ENCODE measurements at regions of chr6 and their contacts with region 1.

Region 1: DNA sequence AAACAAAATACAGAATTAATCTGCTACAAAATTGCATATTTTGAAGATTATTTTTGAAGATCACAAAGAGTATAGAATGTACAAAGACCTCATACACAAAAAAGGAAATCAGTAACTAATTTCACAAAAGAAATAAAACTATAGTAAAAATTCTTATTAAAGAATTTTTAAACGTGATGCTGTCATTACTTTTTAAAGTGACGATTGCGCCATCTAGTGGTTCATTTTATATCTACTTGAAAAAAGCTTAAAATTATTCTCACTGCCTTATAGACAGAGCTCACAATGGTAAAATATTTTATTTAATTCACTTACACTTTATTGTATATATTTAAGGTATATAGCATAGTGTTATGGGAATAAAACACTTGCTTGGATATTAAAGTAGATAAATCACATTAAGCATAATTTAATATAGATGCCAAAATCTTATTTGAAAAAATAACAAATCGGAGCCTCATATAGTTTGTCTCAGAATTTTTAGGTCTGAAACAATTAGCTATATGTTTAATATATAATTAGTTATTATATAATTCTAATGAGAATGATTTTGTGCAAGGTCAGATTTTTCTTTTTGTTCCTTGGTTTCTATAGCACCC is 128.8 kb downstream of the PHF3 start:
- DNase-seq: no peak

Region 2: DNA sequence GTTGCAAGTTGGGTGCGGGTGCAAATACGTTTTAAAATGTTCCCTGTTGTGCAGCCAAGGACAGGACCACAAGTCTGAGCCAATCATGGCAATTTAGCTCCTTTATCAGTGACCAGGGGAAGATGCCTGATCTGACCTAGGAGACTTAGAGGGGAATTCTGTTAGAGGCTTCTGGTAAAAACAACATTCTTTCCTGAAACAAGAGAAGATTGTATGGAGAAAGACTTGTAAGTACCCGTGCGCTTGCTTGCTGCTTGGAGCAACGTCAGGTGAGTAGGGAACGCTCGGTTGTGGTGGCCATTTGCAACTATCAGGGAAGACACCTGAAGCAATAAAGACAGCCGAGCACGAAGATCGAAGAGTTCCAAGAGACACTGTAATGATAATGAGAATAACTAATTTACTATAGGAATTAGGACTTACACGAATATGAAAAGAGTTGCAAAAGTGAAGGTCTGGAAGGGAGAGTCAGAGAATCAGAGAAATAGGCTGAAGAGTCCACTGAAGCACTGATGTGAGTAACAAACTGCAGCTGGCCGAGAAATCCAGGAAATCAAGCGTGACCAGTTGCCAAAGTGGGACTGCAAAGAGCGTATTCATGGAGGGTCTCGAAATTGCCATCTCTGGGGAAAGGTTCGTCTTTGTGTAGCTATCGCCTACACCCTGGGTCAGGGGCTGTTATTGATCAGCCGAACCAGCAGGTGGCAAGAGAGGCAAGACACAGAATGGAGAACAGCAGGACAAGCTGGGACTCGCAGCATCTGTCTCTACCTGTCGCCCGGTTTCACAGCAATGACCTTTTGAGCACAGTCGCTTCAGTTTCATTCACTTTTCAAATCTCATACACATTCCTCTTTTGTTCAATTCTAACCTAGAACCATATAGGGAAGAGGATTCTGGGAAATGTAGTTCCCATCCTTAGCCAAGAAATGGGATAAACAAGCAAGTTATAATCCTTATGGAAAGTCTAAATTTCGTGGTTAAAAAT is 166.1 kb before region 1 on chr6:
- intact Hi-C with region 1: loop called (anchors 2 kb)
- DNase-seq: peak; percentile 80

Region 3: GRCh38 chr6:63887002-63887751 is 122.8 kb after region 1 on chr6:
- intact Hi-C with region 1: no loop called
- DNase-seq: no peak

Measured in cardiac septum (tissue), 1 donor.